ENCODE measurements at regions of chr5 and their contacts with region 1.

Region 1: DNA sequence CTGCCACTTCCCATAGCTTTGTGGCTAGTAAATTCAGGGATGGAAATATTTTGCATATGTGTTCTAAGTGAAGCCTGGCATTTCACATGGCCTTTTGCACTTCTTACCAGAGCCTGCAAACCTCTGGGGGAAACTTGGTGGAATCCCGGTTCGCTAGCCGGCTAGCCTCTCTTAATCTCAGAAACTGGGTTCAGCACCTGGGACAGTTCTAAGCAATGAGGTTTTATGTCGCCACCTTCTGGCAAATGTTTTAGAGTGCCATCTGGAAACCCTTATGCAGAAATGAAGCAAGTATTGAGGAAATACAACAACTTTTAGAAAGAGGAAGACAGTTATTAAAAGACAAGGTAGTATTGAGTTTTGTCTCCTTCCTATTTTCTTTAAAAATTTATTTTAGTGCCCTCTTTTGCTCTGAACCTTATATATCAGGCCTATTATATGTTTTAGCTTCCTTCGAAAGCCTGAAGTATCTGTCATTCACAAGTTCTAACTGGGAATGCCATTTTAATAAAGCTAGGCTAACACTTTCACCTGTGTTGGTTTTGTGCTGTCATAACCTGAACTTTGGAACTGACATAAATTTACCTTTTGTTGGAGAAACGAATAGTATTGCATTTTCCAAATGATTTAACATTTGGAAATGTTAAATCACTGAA is 963 bp upstream of the HTR1A start:
- DNase-seq: peak; percentile 78
- H3K4me3 ChIP-seq: no peak overlapping the region
- H3K27ac ChIP-seq: no peak overlapping the region
- H3K4me1 ChIP-seq: no peaks in the 10 kb centered on the region
- H3K27me3 ChIP-seq: peaks cover 47% of the 10 kb centered on the region
- CTCF ChIP-seq: peak; percentile 85

Region 2: GRCh38 chr5:62448528-62448927 is 1514.7 kb before region 1 on chr5:
- CTCF ChIA-PET with region 1: no interaction called
- POLR2A ChIA-PET with region 1: no interaction called
- intact Hi-C with region 1: loop called (anchors 10 kb)
- DNase-seq: no peak
- H3K4me3 ChIP-seq: no peak overlapping the region
- H3K27ac ChIP-seq: no peak overlapping the region
- H3K4me1 ChIP-seq: peaks cover under 1% of the 10 kb centered on the region
- H3K27me3 ChIP-seq: no peaks in the 10 kb centered on the region
- CTCF ChIP-seq: no peak

Region 3: GRCh38 chr5:62791059-62791458 is 1172.1 kb before region 1 on chr5:
- CTCF ChIA-PET with region 1: no interaction called
- POLR2A ChIA-PET with region 1: no interaction called
- intact Hi-C with region 1: loop called (anchors 10 kb)
- DNase-seq: peak; percentile 51
- H3K4me3 ChIP-seq: no peak overlapping the region
- H3K27ac ChIP-seq: no peak overlapping the region
- H3K4me1 ChIP-seq: no peaks in the 10 kb centered on the region
- H3K27me3 ChIP-seq: peaks cover 9% of the 10 kb centered on the region
- CTCF ChIP-seq: peak; percentile 69

Region 4: DNA sequence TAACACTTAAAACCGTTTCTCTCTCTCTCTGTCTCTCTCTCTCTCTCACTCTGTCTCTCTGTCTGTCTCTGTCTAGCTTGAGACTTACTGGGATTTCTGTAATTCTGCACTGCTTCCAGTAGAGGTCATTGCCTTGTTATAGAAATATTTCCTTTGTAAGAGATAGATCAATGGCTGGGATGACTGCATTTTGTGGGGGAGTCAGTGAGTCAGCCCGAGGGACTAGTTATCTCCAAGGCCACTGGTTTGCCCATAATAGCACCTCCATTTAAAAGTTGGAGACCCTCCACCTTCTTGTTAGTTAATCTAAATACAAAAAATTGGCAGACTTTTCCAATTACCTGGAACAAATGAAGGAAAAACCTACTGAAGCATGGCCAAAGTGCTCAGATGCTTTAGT is 837.3 kb before region 1 on chr5:
- CTCF ChIA-PET with region 1: no interaction called
- POLR2A ChIA-PET with region 1: no interaction called
- intact Hi-C with region 1: loop called (anchors 2 kb)
- DNase-seq: peak; percentile 66
- H3K4me3 ChIP-seq: no peak overlapping the region
- H3K27ac ChIP-seq: no peak overlapping the region
- H3K4me1 ChIP-seq: peaks cover 7% of the 10 kb centered on the region
- H3K27me3 ChIP-seq: no peaks in the 10 kb centered on the region
- CTCF ChIP-seq: peak; percentile 62

Region 5: GRCh38 chr5:63401436-63402046 is 561.7 kb before region 1 on chr5:
- CTCF ChIA-PET with region 1: no interaction called
- POLR2A ChIA-PET with region 1: no interaction called
- intact Hi-C with region 1: loop called (anchors 1 kb)
- DNase-seq: peak; percentile 68
- H3K4me3 ChIP-seq: no peak overlapping the region
- H3K27ac ChIP-seq: no peak overlapping the region
- H3K4me1 ChIP-seq: no peaks in the 10 kb centered on the region
- H3K27me3 ChIP-seq: peaks cover 19% of the 10 kb centered on the region
- CTCF ChIP-seq: peak; percentile 90

Region 6: DNA sequence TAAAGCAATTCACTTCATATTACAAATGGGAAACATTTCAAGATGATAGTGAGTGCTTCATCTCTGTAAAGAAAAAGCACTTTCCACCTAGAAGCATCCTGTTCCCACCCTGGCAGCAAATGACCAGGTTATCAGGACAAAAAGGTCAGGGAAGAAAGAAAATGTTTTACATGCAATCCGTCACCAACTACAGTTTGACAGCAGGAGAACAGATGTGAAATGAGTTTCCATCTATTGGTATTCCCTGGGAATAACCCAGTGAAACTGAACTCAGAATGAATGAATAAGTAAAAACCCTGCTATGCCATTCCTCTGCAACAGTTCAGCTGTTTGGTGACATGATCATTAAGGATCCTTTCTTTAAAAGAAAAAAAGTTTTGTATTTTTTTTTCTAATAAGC is 68.5 kb before region 1 on chr5:
- CTCF ChIA-PET with region 1: no interaction called
- POLR2A ChIA-PET with region 1: no interaction called
- intact Hi-C with region 1: no loop called
- DNase-seq: no peak
- H3K4me3 ChIP-seq: no peak overlapping the region
- H3K27ac ChIP-seq: no peak overlapping the region
- H3K4me1 ChIP-seq: no peaks in the 10 kb centered on the region
- H3K27me3 ChIP-seq: no peaks in the 10 kb centered on the region
- CTCF ChIP-seq: no peak

Region 7: GRCh38 chr5:64003966-64004365 is 40.8 kb after region 1 on chr5:
- CTCF ChIA-PET with region 1: no interaction called
- POLR2A ChIA-PET with region 1: no interaction called
- intact Hi-C with region 1: no loop called
- DNase-seq: no peak
- H3K4me3 ChIP-seq: no peak overlapping the region
- H3K27ac ChIP-seq: no peak overlapping the region
- H3K4me1 ChIP-seq: no peaks in the 10 kb centered on the region
- H3K27me3 ChIP-seq: no peaks in the 10 kb centered on the region
- CTCF ChIP-seq: no peak

Region 8: GRCh38 chr5:64180661-64181343 is 217.6 kb after region 1 on chr5:
- CTCF ChIA-PET with region 1: no interaction called
- POLR2A ChIA-PET with region 1: no interaction called
- intact Hi-C with region 1: no loop called
- DNase-seq: no peak
- H3K4me3 ChIP-seq: no peak overlapping the region
- H3K27ac ChIP-seq: no peak overlapping the region
- H3K4me1 ChIP-seq: no peaks in the 10 kb centered on the region
- H3K27me3 ChIP-seq: no peaks in the 10 kb centered on the region
- CTCF ChIP-seq: no peak

Region 9: DNA sequence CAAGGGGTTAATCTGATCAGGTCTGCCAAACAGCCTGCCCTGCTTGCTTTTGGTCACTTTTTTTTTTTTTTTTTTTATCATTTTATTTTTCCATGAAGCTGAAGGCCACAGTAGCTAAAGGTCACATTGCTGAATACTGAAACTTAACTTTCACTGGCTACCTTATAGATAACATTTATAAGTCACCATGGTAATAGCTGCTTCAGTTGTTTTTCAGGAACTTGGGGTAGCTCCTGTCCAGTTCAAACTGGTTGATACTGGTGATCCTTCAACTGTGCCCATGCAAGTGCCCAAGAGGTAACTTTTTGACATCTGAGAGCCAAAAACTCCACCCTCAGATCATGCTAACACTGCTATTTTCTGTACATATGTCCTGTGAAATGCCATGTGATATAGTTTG is 474.3 kb after region 1 on chr5:
- CTCF ChIA-PET with region 1: no interaction called
- POLR2A ChIA-PET with region 1: no interaction called
- intact Hi-C with region 1: loop called (anchors 10 kb)
- DNase-seq: no peak
- H3K4me3 ChIP-seq: no peak overlapping the region
- H3K27ac ChIP-seq: no peak overlapping the region
- H3K4me1 ChIP-seq: no peaks in the 10 kb centered on the region
- H3K27me3 ChIP-seq: no peaks in the 10 kb centered on the region
- CTCF ChIP-seq: no peak

Measured in A673 (cell line).